ENCODE measurements at regions of chr6 and their contacts with region 1.

Region 1: DNA sequence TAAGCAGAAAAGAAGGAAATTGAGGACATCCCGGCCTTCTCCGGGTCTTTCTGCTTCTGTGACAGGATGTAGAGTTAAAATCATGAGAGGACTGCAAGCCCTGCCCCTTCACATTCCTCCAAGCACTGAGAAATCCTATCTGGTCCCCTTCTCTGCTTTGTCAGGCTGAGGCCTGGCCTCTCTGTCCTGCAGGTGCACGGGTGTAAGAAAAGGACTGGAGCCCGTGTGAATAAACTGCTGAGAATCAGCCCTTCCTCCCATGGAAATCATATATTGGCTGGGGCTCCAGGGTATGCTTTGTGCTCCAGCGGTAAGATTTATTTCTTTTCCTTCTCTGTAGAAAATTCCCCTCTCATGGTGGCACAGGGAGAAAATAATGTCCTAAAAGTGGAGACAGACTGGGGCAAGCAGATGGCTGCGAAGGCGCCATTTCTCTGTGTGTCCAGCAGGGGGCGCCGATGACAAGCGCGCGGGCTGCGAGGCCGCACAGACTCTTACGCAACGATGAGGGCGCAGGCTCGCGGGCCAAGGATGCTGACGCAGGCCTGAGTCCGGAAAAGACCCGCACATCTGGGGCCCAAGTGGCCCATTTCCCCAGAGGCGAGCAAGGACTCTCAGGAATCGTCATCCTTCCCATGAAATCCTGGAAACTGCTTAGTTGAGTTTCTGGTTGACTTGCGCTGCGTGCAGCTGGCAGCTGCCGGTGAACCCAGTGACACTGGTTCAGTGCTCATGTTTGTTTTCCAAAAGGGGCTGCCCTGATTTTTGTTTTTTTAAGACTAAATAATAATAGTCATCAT is 258.6 kb downstream of the ADGB start:
- DNase-seq: peak; percentile 72
- ATAC-seq: peak; percentile 92
- H3K4me3 ChIP-seq: peak overlapping the region in 4 of 5 experiments; percentile 27 to 45 (median 36)
- H3K4me3 Mint-ChIP-seq: peak overlapping the region; percentile 78
- H3K27ac ChIP-seq: no peak overlapping the region
- H3K27ac Mint-ChIP-seq: peak overlapping the region; percentile 62
- H3K4me1 ChIP-seq: peaks cover 3 to 4% of the 10 kb centered on the region in 2 donors
- H3K4me1 Mint-ChIP-seq: peaks cover 8% of the 10 kb centered on the region
- H3K27me3 ChIP-seq: peaks cover 0 to 3% (median 0%) of the 10 kb centered on the region in 4 experiments
- H3K27me3 Mint-ChIP-seq: peaks cover 6% of the 10 kb centered on the region
- CTCF ChIP-seq: peak; percentile 99

Region 2: GRCh38 chr6:146123616-146124015 is 733.8 kb before region 1 on chr6:
- CTCF ChIA-PET with region 1: no interaction called
- POLR2A ChIA-PET with region 1: no interaction called
- intact Hi-C with region 1: no loop called
- DNase-seq: no peak
- ATAC-seq: no peak
- H3K4me3 ChIP-seq: no peak overlapping the region
- H3K4me3 Mint-ChIP-seq: no peak overlapping the region
- H3K27ac ChIP-seq: no peak overlapping the region
- H3K27ac Mint-ChIP-seq: no peak overlapping the region
- H3K4me1 ChIP-seq: no peaks in the 10 kb centered on the region
- H3K4me1 Mint-ChIP-seq: no peaks in the 10 kb centered on the region
- H3K27me3 ChIP-seq: no peaks in the 10 kb centered on the region
- H3K27me3 Mint-ChIP-seq: no peaks in the 10 kb centered on the region
- CTCF ChIP-seq: no peak

Region 3: GRCh38 chr6:147285087-147285855 is 427.9 kb after region 1 on chr6:
- CTCF ChIA-PET with region 1: interaction called, 8 read pairs
- POLR2A ChIA-PET with region 1: no interaction called
- intact Hi-C with region 1: loop called (anchors 1 kb)
- DNase-seq: peak; percentile 38
- ATAC-seq: no peak
- H3K4me3 ChIP-seq: no peak overlapping the region
- H3K4me3 Mint-ChIP-seq: no peak overlapping the region
- H3K27ac ChIP-seq: peak overlapping the region in 1 of 2 donors; percentile 4
- H3K27ac Mint-ChIP-seq: peak overlapping the region; percentile 2
- H3K4me1 ChIP-seq: peaks cover 0 to 6% of the 10 kb centered on the region in 2 donors
- H3K4me1 Mint-ChIP-seq: peaks cover 8% of the 10 kb centered on the region
- H3K27me3 ChIP-seq: no peaks in the 10 kb centered on the region
- H3K27me3 Mint-ChIP-seq: no peaks in the 10 kb centered on the region
- CTCF ChIP-seq: peak; percentile 58

Region 4: DNA sequence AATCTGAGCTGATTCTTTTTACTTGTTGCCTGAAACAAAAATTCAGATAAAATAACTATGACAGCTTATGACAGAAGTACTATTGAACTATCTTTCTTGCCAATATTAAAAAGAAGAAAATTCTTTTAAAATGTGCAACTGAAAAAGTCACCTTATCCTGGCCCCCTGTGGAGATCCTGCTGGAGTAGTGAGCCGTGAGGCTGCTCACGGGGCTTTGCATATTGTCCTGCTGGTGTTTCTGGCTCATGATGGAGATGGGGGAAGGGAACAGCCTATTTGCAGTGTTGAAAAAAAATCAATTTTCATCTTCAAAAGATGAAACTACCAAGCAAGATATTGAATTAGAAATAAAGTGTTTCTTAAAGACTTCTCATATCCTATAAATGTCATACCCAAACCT is 867.1 kb after region 1 on chr6:
- CTCF ChIA-PET with region 1: no interaction called
- POLR2A ChIA-PET with region 1: no interaction called
- intact Hi-C with region 1: no loop called
- DNase-seq: no peak
- ATAC-seq: no peak
- H3K4me3 ChIP-seq: no peak overlapping the region
- H3K4me3 Mint-ChIP-seq: no peak overlapping the region
- H3K27ac ChIP-seq: no peak overlapping the region
- H3K27ac Mint-ChIP-seq: no peak overlapping the region
- H3K4me1 ChIP-seq: no peaks in the 10 kb centered on the region
- H3K4me1 Mint-ChIP-seq: no peaks in the 10 kb centered on the region
- H3K27me3 ChIP-seq: no peaks in the 10 kb centered on the region
- H3K27me3 Mint-ChIP-seq: no peaks in the 10 kb centered on the region
- CTCF ChIP-seq: no peak

Region 5: DNA sequence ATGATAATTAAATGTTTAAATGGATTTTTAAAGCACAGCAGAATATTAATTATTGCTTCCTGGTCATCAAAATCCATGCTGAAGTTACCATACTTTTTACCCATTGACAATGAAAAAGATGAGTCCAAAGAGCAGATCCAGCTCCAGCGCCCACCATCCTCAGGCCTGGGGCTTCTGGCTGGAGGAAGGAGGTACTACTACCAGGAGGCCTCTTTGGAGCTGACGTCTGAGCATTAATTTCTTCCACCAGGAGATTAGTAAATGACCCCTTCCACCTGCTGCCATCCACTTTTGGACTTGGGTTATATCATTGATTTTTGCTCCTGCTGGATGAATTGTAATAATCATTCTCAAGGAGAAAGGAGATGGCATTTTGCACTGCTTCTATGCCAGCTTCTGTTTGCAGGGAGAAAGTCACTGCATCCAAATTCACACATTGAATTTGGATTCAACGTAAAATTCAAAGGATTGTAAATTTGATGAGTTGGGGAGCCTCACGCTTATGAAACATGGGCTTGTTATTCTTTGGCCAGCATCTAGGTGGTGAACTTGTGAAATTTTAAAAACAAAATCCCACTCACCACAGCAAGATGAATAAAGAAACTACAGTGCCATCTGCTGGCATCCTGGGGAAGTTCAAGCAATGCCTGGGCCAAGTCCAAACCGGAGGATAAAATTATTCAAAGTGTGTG is 1607.1 kb after region 1 on chr6:
- CTCF ChIA-PET with region 1: interaction called, 4 read pairs
- POLR2A ChIA-PET with region 1: no interaction called
- intact Hi-C with region 1: loop called (anchors 1 kb)
- DNase-seq: peak; percentile 62
- ATAC-seq: peak; percentile 72
- H3K4me3 ChIP-seq: no peak overlapping the region
- H3K4me3 Mint-ChIP-seq: no peak overlapping the region
- H3K27ac ChIP-seq: no peak overlapping the region
- H3K27ac Mint-ChIP-seq: no peak overlapping the region
- H3K4me1 ChIP-seq: no peaks in the 10 kb centered on the region
- H3K4me1 Mint-ChIP-seq: peaks cover 2% of the 10 kb centered on the region
- H3K27me3 ChIP-seq: peaks cover 0 to 2% (median 0%) of the 10 kb centered on the region in 4 experiments
- H3K27me3 Mint-ChIP-seq: peaks cover 24% of the 10 kb centered on the region
- CTCF ChIP-seq: peak; percentile 99